ENCODE measurements at regions of chr12 and their contacts with region 1.

Region 1: GRCh38 chr12:31119803-31120211 is 46.1 kb downstream of the DDX11 start:
- DNase-seq: no peak
- H3K4me3 ChIP-seq: peak overlapping the region in 1 of 3 donors; percentile 50
- H3K27ac ChIP-seq: no peak overlapping the region
- H3K4me1 ChIP-seq: no peaks in the 10 kb centered on the region
- H3K27me3 ChIP-seq: peaks cover 0 to 12% of the 10 kb centered on the region in 2 donors
- CTCF ChIP-seq: no peak
- POLR2A ChIP-seq: no peak

Region 2: DNA sequence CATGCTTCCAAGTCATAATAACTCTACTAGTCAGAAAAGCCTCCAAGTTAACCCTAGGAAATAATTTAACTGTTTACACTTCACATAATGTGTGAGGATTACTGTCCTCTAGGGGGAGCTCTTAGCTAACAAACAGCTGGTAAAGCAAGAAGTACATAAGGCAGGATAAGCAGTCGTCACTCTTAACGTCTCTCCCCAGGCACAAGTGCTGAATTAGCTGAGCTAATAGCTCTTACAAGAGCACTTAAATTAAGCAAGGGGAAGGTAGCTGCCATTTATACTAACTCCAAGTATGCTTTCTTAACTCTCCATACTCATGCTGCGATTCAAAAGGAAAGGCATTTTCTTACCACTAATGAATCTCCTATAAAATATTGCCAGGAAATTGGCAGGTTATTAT is 272.5 kb before region 1 on chr12:
- intact Hi-C with region 1: loop called (anchors 5 kb)
- DNase-seq: no peak
- H3K4me3 ChIP-seq: no peak overlapping the region
- H3K27ac ChIP-seq: no peak overlapping the region
- H3K4me1 ChIP-seq: no peaks in the 10 kb centered on the region
- H3K27me3 ChIP-seq: no peaks in the 10 kb centered on the region
- CTCF ChIP-seq: peak; percentile 14 to 62 (median 32)
- POLR2A ChIP-seq: no peak